ENCODE measurements at regions of chr1 and their contacts with region 1.

Region 1: DNA sequence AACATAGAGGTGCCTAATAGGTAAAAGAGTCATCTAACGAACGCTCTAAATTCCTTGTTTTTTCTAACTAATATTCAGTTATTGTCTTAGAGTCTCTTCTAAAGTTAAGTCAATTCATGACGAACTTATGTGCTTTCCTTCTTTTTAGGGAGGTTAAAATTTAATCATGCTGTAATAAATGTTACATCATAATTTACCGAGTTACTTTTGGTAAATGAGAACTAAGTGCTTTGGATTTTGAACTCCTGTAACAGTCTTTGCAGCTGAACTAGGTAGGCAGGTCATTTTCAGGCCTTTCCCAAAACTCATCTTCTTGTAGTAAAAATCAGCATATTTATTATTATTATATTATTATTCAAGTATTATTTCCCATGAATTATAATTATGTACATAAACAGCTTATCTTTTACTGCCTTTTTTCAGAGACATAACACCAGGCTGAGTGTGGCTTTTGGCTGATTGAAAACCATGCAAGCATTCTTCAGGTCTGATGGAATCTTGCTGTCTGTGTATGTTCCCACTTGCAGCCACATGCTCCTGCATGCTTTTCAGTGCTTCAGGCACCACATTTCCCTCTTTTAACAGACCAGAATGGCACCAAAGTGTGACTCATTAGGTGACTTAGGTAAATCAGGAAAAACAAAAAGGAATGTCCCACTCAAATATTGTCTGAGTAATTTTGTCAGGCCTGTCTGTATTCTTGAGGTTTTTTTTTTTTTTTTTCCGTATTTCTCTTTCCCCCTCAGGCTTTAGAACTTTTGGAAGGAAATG is 81.0 kb upstream of the CD55 start:
- DNase-seq: peak; percentile 94
- H3K4me3 Mint-ChIP-seq: peak overlapping the region; percentile 3
- H3K27ac Mint-ChIP-seq: peak overlapping the region; percentile 71
- H3K4me1 Mint-ChIP-seq: peaks cover 28% of the 10 kb centered on the region
- H3K27me3 Mint-ChIP-seq: no peaks in the 10 kb centered on the region
- CTCF ChIP-seq: no peak

Region 2: GRCh38 chr1:207227131-207227630 is 13.3 kb before region 1 on chr1:
- CTCF ChIA-PET with region 1: no interaction called
- POLR2A ChIA-PET with region 1: interaction called, 12 read pairs
- intact Hi-C with region 1: no loop called
- DNase-seq: no peak
- H3K4me3 Mint-ChIP-seq: no peak overlapping the region
- H3K27ac Mint-ChIP-seq: no peak overlapping the region
- H3K4me1 Mint-ChIP-seq: peaks cover 17% of the 10 kb centered on the region
- H3K27me3 Mint-ChIP-seq: no peaks in the 10 kb centered on the region
- CTCF ChIP-seq: no peak

Region 3: GRCh38 chr1:207309775-207310273 is 69.3 kb after region 1 on chr1:
- CTCF ChIA-PET with region 1: no interaction called
- POLR2A ChIA-PET with region 1: interaction called, 15 read pairs
- intact Hi-C with region 1: no loop called
- DNase-seq: peak; percentile 91
- H3K4me3 Mint-ChIP-seq: peak overlapping the region; percentile 61
- H3K27ac Mint-ChIP-seq: peak overlapping the region; percentile 93
- H3K4me1 Mint-ChIP-seq: peaks cover 24% of the 10 kb centered on the region
- H3K27me3 Mint-ChIP-seq: no peaks in the 10 kb centered on the region
- CTCF ChIP-seq: no peak

Measured in MCF 10A (cell line).